ENCODE measurements at regions of chr2 and their contacts with region 1.

Region 1: DNA sequence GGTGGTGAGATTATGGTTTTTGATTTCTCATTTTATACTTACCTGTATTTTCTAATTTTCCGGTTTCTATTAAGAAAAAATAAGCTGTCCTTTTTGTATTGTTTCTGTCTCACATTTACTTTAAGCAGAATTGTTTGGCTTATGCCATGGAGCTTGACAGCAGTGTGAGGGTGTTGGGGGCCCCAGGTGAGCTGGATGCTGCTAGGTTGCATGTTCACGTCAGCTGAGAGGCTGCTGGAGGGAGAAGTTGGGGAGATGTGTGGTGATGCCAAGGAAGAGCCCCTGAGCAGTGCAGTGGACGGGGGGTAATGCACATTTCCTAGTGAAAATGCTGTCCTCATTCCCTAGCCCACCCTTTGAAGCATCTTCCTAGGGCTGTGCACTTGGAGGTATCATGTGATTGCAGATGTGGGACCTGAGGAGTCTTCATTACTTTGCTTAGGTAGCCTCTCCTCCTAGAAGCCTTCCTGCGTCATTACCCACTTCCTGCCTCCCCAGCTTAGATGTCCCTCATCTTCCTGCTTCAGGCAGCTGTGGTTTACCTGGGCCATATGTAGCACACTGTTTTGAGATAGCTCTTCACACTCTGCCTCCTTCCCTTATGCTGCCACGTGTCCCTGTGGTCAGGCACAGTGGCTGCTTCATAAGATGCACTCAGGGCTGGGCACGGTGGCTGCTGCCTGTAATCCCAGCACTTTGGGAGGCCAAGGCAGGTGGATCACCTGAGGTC is 16.2 kb downstream of the ATG16L1 start:
- DNase-seq: peak; percentile 85
- ATAC-seq: peak; percentile 95
- H3K4me3 Mint-ChIP-seq: peak overlapping the region; percentile 53
- H3K27ac Mint-ChIP-seq: peak overlapping the region; percentile 98
- H3K4me1 Mint-ChIP-seq: peaks cover 66% of the 10 kb centered on the region
- H3K27me3 Mint-ChIP-seq: no peaks in the 10 kb centered on the region

Region 2: DNA sequence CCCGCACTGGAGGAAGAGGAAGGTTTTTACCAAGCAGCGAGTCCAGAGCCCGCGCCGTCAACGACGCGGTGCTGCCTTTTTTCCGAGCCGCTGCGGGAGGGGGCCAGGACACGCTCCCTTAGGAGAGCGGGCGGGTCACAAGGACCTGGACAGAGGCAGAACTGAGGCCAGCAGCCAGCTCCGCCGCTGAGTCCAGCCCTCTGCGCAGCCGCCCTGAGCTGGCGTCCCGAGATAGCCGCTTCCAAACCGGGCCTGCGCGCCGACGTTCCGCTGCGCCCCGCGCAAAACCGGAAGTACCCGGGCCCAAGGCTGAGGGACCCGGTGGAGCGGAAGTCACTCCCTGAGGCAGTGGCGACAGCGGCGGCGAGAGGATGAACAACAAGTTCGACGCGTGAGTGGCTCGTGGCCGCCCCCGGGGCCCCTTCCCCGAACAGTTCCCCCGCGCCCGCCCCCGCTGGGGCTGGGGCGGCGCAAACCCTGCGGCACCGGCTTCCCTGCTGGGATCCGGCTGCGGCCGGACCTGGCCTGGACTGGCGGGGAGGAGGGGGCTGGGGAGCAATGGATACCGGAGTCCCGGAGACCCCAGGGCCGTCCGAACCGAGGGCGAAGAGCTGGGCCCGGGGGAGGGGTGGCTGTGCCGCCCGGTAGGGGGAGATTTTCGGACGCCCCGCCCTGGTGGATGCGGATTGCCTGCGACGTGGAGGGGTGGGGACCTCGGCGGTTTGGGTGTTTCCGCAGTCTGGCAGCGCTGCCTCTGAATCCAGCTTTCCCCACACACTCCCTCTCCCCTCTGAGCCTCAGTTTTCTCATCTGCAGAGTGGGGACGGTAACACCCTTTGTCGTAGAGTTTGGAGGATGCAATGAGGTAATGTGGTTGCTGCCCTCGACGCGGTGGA is 717.1 kb before region 1 on chr2 and contains the starts of genes EIF4E2 and TIGD1:
- CTCF ChIA-PET with region 1: no interaction called
- POLR2A ChIA-PET with region 1: no interaction called
- intact Hi-C with region 1: loop called in 1 of 2 experiments (anchors 2 kb)
- DNase-seq: peak; percentile 96
- ATAC-seq: peak; percentile 95
- H3K4me3 Mint-ChIP-seq: peak within 1 kb of the TSS; percentile 98
- H3K27ac Mint-ChIP-seq: peak within 1 kb of the TSS; percentile 100
- H3K4me1 Mint-ChIP-seq: peaks cover 66% of the 10 kb centered on the region
- H3K27me3 Mint-ChIP-seq: no peaks in the 10 kb centered on the region
- total RNA-seq, gene EIF4E2: 57.0 to 68.0 TPM
- total RNA-seq, gene TIGD1: 7.6 to 7.9 TPM

Region 3: DNA sequence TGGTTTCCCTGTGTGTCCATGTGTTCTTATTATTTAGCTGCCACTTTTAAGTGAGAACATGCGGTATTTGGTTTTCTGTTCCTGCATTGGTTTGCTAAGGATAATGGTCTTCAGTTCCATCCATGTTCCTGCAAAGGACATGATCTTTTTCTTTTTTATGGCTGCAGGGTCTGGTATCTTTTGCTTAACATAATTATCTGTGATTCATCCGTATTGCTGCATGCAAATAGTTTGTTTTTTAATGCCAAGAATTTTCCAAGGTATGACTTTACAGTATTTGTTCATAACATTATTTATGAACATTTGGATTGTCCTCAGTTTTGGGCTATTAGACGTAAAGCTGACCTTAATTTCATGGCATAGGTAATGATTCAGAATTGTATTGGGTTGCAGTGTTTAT is 552.7 kb before region 1 on chr2:
- CTCF ChIA-PET with region 1: no interaction called
- POLR2A ChIA-PET with region 1: no interaction called
- intact Hi-C with region 1: no loop called
- DNase-seq: no peak
- ATAC-seq: no peak
- H3K4me3 Mint-ChIP-seq: no peak overlapping the region
- H3K27ac Mint-ChIP-seq: no peak overlapping the region
- H3K4me1 Mint-ChIP-seq: peaks cover 21% of the 10 kb centered on the region
- H3K27me3 Mint-ChIP-seq: no peaks in the 10 kb centered on the region

Region 4: DNA sequence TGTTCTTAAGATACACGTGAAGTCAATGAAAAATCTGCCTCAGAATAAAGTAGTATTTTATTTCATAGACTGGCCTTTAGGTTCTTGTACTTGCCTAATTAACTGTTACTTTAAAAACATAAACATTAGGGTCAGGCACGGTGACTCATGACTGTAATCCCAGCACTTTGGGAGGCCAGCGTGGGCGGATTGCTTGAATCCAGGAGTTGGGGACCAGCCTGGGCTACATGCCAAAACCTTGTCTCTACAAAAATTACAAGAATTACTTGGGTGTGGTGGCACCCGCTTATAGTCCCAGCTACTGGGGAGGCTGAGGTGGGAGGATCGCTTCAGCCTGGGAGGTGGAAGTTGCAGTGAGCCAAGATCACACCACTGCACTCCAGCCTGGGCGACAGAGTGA is 413.6 kb before region 1 on chr2:
- CTCF ChIA-PET with region 1: interaction called, 4 read pairs
- POLR2A ChIA-PET with region 1: no interaction called
- intact Hi-C with region 1: loop called in 1 of 2 experiments (anchors 5 kb)
- DNase-seq: no peak
- ATAC-seq: no peak
- H3K4me3 Mint-ChIP-seq: no peak overlapping the region
- H3K27ac Mint-ChIP-seq: no peak overlapping the region
- H3K4me1 Mint-ChIP-seq: peaks cover 3% of the 10 kb centered on the region
- H3K27me3 Mint-ChIP-seq: no peaks in the 10 kb centered on the region

Region 5: GRCh38 chr2:233303252-233303651 is 35.6 kb after region 1 on chr2:
- CTCF ChIA-PET with region 1: no interaction called
- POLR2A ChIA-PET with region 1: no interaction called
- intact Hi-C with region 1: no loop called
- DNase-seq: no peak
- ATAC-seq: no peak
- H3K4me3 Mint-ChIP-seq: no peak overlapping the region
- H3K27ac Mint-ChIP-seq: no peak overlapping the region
- H3K4me1 Mint-ChIP-seq: no peaks in the 10 kb centered on the region
- H3K27me3 Mint-ChIP-seq: no peaks in the 10 kb centered on the region

Region 6: GRCh38 chr2:233331536-233331935 is 63.9 kb after region 1 on chr2:
- CTCF ChIA-PET with region 1: no interaction called
- POLR2A ChIA-PET with region 1: interaction called, 4 read pairs
- intact Hi-C with region 1: loop called in 1 of 2 experiments (anchors 2 kb)
- DNase-seq: peak; percentile 71
- ATAC-seq: peak; percentile 93
- H3K4me3 Mint-ChIP-seq: peak overlapping the region; percentile 18
- H3K27ac Mint-ChIP-seq: peak overlapping the region; percentile 88
- H3K4me1 Mint-ChIP-seq: peaks cover 35% of the 10 kb centered on the region
- H3K27me3 Mint-ChIP-seq: no peaks in the 10 kb centered on the region

Region 7: DNA sequence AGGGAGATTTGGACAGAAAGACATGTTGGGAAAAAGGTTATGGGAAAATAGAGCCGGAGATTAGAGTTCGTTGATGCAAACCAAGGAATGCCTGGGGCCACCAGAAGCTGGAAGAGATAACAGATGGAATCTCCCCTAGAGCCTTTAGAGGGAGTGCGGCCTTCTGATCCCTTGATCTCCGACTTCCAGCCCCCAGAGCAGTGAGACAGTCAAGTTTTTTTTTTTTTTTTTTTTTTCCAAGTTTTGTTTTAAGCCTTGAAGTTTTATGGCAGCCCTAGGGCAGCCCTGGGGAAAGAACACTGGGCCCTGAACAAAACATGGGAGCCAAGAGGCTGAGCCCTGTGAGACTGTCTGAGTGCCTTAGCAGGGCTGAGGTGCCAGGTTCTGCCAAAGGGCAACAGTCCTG is 93.1 kb after region 1 on chr2:
- CTCF ChIA-PET with region 1: no interaction called
- POLR2A ChIA-PET with region 1: no interaction called
- intact Hi-C with region 1: no loop called
- DNase-seq: no peak
- ATAC-seq: no peak
- H3K4me3 Mint-ChIP-seq: no peak overlapping the region
- H3K27ac Mint-ChIP-seq: peak overlapping the region; percentile 0
- H3K4me1 Mint-ChIP-seq: peaks cover 54% of the 10 kb centered on the region
- H3K27me3 Mint-ChIP-seq: no peaks in the 10 kb centered on the region

Region 8: GRCh38 chr2:233418761-233419625 is 151.3 kb after region 1 on chr2:
- CTCF ChIA-PET with region 1: interaction called, 5 read pairs
- POLR2A ChIA-PET with region 1: no interaction called
- intact Hi-C with region 1: loop called in 1 of 2 experiments (anchors 5 kb)
- DNase-seq: peak; percentile 72
- ATAC-seq: peak; percentile 52
- H3K4me3 Mint-ChIP-seq: peak overlapping the region; percentile 63
- H3K27ac Mint-ChIP-seq: peak overlapping the region; percentile 81
- H3K4me1 Mint-ChIP-seq: peaks cover 97% of the 10 kb centered on the region
- H3K27me3 Mint-ChIP-seq: no peaks in the 10 kb centered on the region